ENCODE measurements at regions of chr19 and their contacts with region 1.

Region 1: GRCh38 chr19:18571564-18572300 is at the start of gene UBA52:
- DNase-seq: peak; percentile 98
- H3K4me3 ChIP-seq: peak within 1 kb of the TSS; percentile 72 to 90 (median 89)
- H3K27ac ChIP-seq: peak within 1 kb of the TSS; percentile 85
- H3K4me1 ChIP-seq: peaks cover 14% of the 10 kb centered on the region
- H3K27me3 ChIP-seq: no peaks in the 10 kb centered on the region
- CTCF ChIP-seq: no peak
- total RNA-seq, gene UBA52: 698 to 1,133 TPM

Region 2: GRCh38 chr19:18469069-18469846 is 102.5 kb before region 1 on chr19:
- CTCF ChIA-PET with region 1: interaction called, 3 read pairs
- dilution Hi-C with region 1: no loop called
- in situ Hi-C with region 1: no loop called
- intact Hi-C with region 1: loop called (anchors 5 kb)
- DNase-seq: no peak
- H3K4me3 ChIP-seq: no peak overlapping the region
- H3K27ac ChIP-seq: no peak overlapping the region
- H3K4me1 ChIP-seq: peaks cover 8% of the 10 kb centered on the region
- H3K27me3 ChIP-seq: no peaks in the 10 kb centered on the region
- CTCF ChIP-seq: peak; percentile 68 to 83

Region 3: DNA sequence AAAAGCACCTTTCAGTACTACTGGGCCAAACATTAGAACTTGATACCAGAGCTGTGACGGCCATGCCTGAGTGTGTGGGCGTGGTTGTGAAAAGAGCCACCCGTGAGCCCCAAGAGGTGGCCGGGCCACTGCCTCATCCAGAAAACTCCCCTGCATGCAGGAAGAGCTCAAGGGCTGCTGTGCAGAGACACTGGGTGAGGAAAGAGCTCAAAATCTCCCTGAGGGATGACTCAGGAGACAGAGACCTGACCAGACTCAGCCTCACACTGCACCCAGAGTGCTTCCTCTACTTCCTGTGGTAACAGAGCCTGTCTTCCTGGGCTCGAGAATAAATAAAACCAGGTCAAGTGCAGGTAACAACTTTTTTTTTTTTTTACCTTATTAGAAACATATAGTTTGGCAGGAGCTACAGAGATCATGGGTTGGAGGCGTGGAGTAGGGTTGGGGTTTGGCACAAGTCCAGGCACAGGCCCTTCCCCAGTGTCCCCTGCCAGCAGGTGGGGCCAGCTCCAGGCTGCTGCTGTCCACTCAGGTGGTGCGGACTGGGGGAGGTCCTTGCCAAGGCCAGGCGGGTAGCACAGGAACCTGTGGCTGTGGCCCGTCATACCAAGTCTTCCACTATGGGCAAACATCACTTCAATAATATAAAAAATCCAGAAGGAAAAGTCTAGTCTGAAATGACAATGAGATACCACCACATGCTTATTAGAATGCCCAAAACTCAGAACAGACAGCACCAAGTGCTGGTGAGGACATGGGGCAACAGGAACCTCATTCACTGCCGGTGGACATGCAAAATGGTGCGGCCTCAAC is 75.4 kb before region 1 on chr19:
- CTCF ChIA-PET with region 1: no interaction called
- dilution Hi-C with region 1: no loop called
- in situ Hi-C with region 1: no loop called
- intact Hi-C with region 1: loop called (anchors 2 kb)
- DNase-seq: peak; percentile 90
- H3K4me3 ChIP-seq: no peak overlapping the region
- H3K27ac ChIP-seq: peak overlapping the region; percentile 36
- H3K4me1 ChIP-seq: peaks cover 29% of the 10 kb centered on the region
- H3K27me3 ChIP-seq: no peaks in the 10 kb centered on the region
- CTCF ChIP-seq: peak in 1 of 2 donors; percentile 38

Region 4: DNA sequence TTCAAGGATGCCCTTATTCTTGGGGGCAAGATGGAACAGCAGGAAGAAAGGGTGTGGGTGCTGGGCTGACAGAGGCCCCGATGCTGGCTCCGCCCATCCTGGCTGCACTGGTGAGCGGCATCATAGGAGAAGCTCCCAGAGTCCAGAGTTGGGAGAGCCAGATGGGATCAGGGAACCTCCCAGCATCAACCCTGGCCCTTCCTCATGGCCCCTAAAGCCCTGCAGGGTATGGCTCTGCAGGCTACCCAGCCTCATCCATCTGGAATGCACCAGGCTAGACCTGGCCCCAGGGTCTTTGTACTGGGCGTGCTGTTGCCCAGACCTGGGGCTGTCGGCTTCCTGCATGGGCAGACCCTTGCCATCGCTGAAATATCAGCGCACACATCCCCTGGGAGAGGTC is 42.0 kb before region 1 on chr19:
- CTCF ChIA-PET with region 1: no interaction called
- dilution Hi-C with region 1: no loop called
- in situ Hi-C with region 1: no loop called
- intact Hi-C with region 1: no loop called
- DNase-seq: no peak
- H3K4me3 ChIP-seq: no peak overlapping the region
- H3K27ac ChIP-seq: no peak overlapping the region
- H3K4me1 ChIP-seq: peaks cover 14% of the 10 kb centered on the region
- H3K27me3 ChIP-seq: no peaks in the 10 kb centered on the region
- CTCF ChIP-seq: no peak

Region 5: GRCh38 chr19:18557474-18558201 is 14.1 kb before region 1 on chr19 and contains the start of gene KXD1:
- CTCF ChIA-PET with region 1: no interaction called
- dilution Hi-C with region 1: no loop called
- in situ Hi-C with region 1: no loop called
- intact Hi-C with region 1: loop called (anchors 1 kb)
- DNase-seq: peak; percentile 94
- H3K4me3 ChIP-seq: peak within 1 kb of the TSS; percentile 69 to 83 (median 81)
- H3K27ac ChIP-seq: peak within 1 kb of the TSS; percentile 73
- H3K4me1 ChIP-seq: no peaks in the 10 kb centered on the region
- H3K27me3 ChIP-seq: no peaks in the 10 kb centered on the region
- CTCF ChIP-seq: no peak
- total RNA-seq, gene KXD1: 83.9 to 98.2 TPM

Region 6: DNA sequence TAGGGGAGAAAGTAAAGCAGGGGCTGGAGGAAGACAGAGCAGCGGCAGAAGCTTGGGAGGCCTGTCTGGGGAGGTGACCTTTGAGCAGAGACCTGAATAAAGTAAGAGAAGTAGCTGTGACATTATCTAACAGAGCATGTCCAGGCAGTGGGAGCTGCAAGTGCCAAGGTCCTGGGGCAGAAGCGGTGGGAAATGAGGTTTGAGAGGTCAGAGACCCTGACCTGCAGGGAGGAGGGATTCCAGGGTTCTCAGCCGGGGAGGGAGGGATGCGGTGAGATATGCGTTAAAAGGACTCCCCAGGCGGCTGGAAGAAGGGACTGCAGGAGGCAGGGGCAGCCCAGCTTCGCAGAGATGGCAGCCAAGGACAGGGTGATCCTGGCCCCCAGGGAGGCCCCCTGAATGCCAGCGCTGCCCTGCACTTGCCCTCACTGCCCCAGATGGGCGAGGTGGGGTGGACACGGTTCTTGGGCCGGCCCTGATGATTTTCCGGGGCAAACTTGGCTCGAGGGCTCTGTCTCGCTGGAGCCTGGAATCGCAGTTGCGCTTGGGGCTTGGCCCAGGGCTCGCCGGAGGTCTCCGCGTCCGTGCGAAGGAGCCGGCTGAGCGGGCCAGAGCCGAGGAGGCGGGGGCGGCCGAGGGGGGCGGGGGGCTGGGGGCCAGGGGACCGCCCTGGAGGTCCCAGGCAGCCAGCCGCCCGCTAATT is 31.7 kb after region 1 on chr19:
- CTCF ChIA-PET with region 1: no interaction called
- dilution Hi-C with region 1: no loop called
- in situ Hi-C with region 1: no loop called
- intact Hi-C with region 1: no loop called
- DNase-seq: no peak
- H3K4me3 ChIP-seq: no peak overlapping the region
- H3K27ac ChIP-seq: no peak overlapping the region
- H3K4me1 ChIP-seq: peaks cover 9% of the 10 kb centered on the region
- H3K27me3 ChIP-seq: peaks cover 24% of the 10 kb centered on the region
- CTCF ChIP-seq: no peak

Region 7: GRCh38 chr19:18629166-18630088 is 57.7 kb after region 1 on chr19:
- CTCF ChIA-PET with region 1: no interaction called
- dilution Hi-C with region 1: no loop called
- in situ Hi-C with region 1: no loop called
- intact Hi-C with region 1: no loop called
- DNase-seq: no peak
- H3K4me3 ChIP-seq: no peak overlapping the region
- H3K27ac ChIP-seq: no peak overlapping the region
- H3K4me1 ChIP-seq: no peaks in the 10 kb centered on the region
- H3K27me3 ChIP-seq: no peaks in the 10 kb centered on the region
- CTCF ChIP-seq: no peak